Natural killer cell (primary cell): ENCODE measurements at regions of chr10 and their contacts with region 1.

Region 1: DNA sequence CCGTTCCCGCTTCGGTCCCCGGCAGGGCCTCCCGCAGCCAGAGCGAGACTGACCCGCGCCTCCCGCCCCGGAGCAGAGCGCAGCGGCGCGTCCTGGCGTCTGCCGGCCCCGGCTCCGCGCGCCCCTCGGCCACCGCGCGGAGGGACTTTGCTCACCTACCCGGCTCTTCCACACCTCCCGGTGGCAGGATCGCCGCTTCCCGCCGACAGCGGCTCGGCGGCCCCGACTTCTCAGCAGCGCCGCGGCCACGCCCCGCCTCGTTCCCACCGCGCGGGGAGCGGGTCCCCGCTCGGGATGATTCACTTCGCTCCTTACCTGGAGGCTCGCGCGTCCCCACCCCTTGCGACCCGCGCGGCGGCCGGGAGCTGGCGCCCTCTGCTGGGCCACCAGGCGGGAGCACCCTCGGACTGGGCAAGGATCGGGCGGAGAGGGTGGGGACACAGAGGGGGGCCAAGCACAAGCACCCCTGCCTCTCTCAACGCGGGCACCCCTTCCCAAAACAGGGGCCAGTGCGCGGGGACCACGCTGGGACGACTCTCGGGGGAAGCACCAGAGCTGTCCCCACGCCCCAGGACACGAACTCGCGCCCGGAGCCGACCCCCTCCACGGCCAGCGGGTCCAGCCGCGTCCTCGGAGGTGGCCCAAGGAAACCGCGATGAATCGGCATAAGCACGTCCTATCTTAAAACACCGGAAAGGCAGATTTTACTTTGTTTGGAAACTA is 101.0 kb upstream of the SVIL start:
- DNase-seq: peak; percentile 84 to 86
- ATAC-seq: peak; percentile 85 to 91 (median 86)
- H3K4me3 ChIP-seq: peak overlapping the region; percentile 58
- H3K4me3 Mint-ChIP-seq: peak overlapping the region; percentile 86
- H3K27ac ChIP-seq: no peak overlapping the region
- H3K27ac Mint-ChIP-seq: peak overlapping the region in 1 of 2 donors; percentile 80
- H3K4me1 ChIP-seq: peaks cover 23% of the 10 kb centered on the region
- H3K4me1 Mint-ChIP-seq: peaks cover 11 to 36% of the 10 kb centered on the region in 2 donors
- H3K27me3 ChIP-seq: peaks cover 2% of the 10 kb centered on the region
- H3K27me3 Mint-ChIP-seq: peaks cover 14 to 16% of the 10 kb centered on the region in 2 donors
- CTCF ChIP-seq: peak; percentile 95

Region 2: DNA sequence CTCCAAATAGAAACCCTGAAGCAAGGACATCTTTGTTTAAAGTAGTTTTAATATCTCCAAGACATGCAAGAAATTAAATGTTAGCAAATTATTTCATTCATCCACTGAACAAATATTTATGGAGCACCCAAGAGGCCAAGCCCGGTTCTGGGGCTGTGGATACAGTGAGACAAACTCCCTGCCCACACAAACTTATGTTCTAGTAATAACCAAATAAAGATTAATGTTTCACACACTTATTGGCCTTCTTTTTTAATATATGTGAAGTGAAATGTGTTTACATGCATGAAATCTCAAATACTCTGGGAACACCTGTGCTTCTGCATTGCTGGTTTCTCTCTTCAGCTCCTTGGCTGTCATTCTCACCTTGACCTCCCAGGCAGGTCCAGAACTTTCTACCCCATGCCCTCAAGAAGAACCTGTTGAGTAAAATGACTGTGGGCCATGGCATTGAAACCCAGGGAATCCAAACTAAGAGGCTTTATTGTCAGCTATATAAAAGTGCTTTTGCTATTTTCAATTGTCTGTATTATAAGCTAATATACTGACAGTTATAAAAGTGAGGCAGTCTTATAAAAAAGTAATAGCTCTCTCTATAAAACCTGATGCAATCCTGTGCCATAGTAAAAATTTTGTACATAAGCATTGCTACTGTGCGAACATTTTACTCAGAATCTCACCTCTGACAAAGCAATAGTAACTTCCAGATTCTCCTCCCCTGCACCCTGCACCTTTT is 144.7 kb before region 1 on chr10:
- intact Hi-C with region 1: loop called (anchors 1 kb)
- DNase-seq: peak in 1 of 2 donors; percentile 8
- ATAC-seq: no peak
- H3K4me3 ChIP-seq: no peak overlapping the region
- H3K4me3 Mint-ChIP-seq: peak overlapping the region; percentile 22
- H3K27ac ChIP-seq: no peak overlapping the region
- H3K27ac Mint-ChIP-seq: peak overlapping the region; percentile 23 to 72
- H3K4me1 ChIP-seq: peaks cover 9% of the 10 kb centered on the region
- H3K4me1 Mint-ChIP-seq: peaks cover 11 to 12% of the 10 kb centered on the region in 2 donors
- H3K27me3 ChIP-seq: no peaks in the 10 kb centered on the region
- H3K27me3 Mint-ChIP-seq: no peaks in the 10 kb centered on the region
- CTCF ChIP-seq: peak; percentile 52

Region 3: DNA sequence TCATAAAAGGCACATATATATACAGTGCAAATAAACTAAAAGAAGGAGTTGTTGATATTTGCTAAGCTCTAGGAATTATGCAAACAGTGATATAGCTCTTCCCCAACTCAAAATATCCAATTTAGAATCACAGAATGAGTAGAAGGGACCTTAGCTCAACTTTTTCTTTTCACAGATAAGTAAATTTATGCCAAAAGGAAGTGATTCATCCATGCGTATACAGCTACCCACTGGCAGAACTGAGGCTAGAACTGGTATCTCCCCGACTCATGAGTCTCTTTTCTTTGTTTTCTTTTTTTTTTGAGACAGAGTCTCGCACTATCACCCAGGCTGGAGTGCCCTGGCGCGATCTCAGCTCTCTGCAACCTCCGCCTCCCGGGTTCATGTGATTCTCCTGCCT is 46.8 kb before region 1 on chr10:
- intact Hi-C with region 1: loop called (anchors 10 kb)
- DNase-seq: peak in 1 of 2 donors; percentile 34
- ATAC-seq: peak; percentile 78 to 80 (median 80)
- H3K4me3 ChIP-seq: no peak overlapping the region
- H3K4me3 Mint-ChIP-seq: peak overlapping the region; percentile 49
- H3K27ac ChIP-seq: peak overlapping the region; percentile 2
- H3K27ac Mint-ChIP-seq: peak overlapping the region; percentile 56 to 85
- H3K4me1 ChIP-seq: peaks cover 19% of the 10 kb centered on the region
- H3K4me1 Mint-ChIP-seq: peaks cover 54 to 57% of the 10 kb centered on the region in 2 donors
- H3K27me3 ChIP-seq: no peaks in the 10 kb centered on the region
- H3K27me3 Mint-ChIP-seq: no peaks in the 10 kb centered on the region
- CTCF ChIP-seq: no peak